PC-9 (cell line): ENCODE measurements at regions of chr7 and their contacts with region 1.

Region 1: DNA sequence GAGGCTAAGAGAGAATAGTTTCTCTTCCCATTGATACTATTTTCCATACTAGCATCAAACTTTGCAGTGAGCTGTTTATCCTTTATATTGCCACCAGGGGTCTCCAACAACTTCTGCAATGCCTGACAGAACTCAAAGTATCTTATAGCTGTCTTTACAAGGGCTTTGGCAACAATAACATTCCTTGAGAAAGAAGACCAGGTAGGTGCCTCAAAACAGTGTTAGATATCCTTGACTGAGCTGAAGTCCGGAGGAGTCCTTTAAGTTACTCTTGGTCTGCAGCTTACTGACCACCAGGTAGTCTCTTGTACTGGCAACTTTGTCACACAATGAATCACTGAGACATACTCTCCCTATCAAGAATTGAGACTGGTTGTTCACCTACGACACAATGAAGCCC is 30.0 kb upstream of the TES start:
- DNase-seq: peak; percentile 25 to 49
- H3K4me3 ChIP-seq: no peak overlapping the region
- H3K27ac ChIP-seq: no peak overlapping the region
- H3K4me1 ChIP-seq: peaks cover 11% of the 10 kb centered on the region; the same call in 1 of the 2 replicates
- H3K27me3 ChIP-seq: no peaks in the 10 kb centered on the region
- CTCF ChIP-seq: peak; percentile 89

Region 2: GRCh38 chr7:116211006-116211912 is 31.0 kb after region 1 on chr7:
- CTCF ChIA-PET with region 1: no interaction called
- POLR2A ChIA-PET with region 1: interaction called, 13 read pairs
- intact Hi-C with region 1: loop called (anchors 1 kb)
- DNase-seq: peak; percentile 92 to 93
- H3K4me3 ChIP-seq: peak overlapping the region; percentile 87
- H3K27ac ChIP-seq: peak overlapping the region; percentile 99
- H3K4me1 ChIP-seq: peaks cover 46% of the 10 kb centered on the region
- H3K27me3 ChIP-seq: no peaks in the 10 kb centered on the region
- CTCF ChIP-seq: no peak

Region 3: GRCh38 chr7:116236020-116236630 is 55.8 kb after region 1 on chr7:
- CTCF ChIA-PET with region 1: interaction called, 14 read pairs
- POLR2A ChIA-PET with region 1: interaction called, 8 read pairs
- intact Hi-C with region 1: loop called (anchors 1 kb)
- DNase-seq: no peak
- H3K4me3 ChIP-seq: no peak overlapping the region
- H3K27ac ChIP-seq: 0 out of 2 replicates have a peak overlapping the region, but pooled peaks have one; percentile 23
- H3K4me1 ChIP-seq: peaks cover 24% of the 10 kb centered on the region
- H3K27me3 ChIP-seq: no peaks in the 10 kb centered on the region
- CTCF ChIP-seq: peak; percentile 76

Region 4: GRCh38 chr7:116298055-116298454 is 117.8 kb after region 1 on chr7:
- CTCF ChIA-PET with region 1: no interaction called
- POLR2A ChIA-PET with region 1: no interaction called
- intact Hi-C with region 1: no loop called
- DNase-seq: no peak
- H3K4me3 ChIP-seq: no peak overlapping the region
- H3K27ac ChIP-seq: no peak overlapping the region
- H3K4me1 ChIP-seq: no peaks in the 10 kb centered on the region
- H3K27me3 ChIP-seq: no peaks in the 10 kb centered on the region
- CTCF ChIP-seq: no peak

Region 5: DNA sequence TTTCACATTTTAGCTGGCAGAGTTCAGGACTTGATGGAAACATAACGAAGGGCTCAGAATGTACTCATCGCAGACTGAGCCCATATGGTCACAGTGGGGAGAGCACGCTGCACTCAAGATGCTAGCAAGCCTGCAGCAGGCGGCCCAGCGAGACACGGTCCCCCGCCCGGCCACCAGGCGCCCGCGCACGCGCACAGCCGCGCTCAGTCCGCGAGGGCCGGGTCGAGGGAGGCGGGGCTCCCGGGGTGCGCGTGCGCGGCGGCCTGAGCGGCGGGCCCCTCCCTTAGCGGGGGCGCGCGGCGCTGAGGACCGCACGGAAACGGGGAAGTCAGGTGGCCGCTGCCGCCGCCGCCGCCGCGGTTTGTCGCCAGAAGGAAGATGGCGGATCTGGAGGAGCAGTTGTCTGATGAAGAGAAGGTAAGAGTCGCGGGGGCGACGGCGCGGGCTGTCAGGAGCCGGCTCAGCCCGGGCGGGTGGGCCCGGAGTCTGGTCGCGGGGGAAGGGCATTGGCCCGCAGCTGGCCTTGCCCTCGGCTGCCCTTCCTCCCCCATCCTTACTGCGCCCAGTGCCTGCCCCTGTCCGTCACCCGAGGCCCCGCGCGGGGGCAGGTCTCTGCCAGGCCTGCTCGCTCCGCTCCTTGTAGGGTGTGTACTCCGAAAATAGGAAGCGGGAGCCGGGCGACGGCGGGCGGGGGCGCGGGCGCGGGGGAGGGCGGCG is 682.1 kb after region 1 on chr7 and contains the start of gene CAPZA2:
- CTCF ChIA-PET with region 1: no interaction called
- POLR2A ChIA-PET with region 1: no interaction called
- intact Hi-C with region 1: loop called (anchors 2 kb)
- DNase-seq: peak; percentile 74 to 97
- H3K4me3 ChIP-seq: peak within 1 kb of the TSS; percentile 99
- H3K27ac ChIP-seq: peak within 1 kb of the TSS; percentile 53
- H3K4me1 ChIP-seq: peaks cover 37% of the 10 kb centered on the region
- H3K27me3 ChIP-seq: no peaks in the 10 kb centered on the region
- CTCF ChIP-seq: no peak
- total RNA-seq, gene CAPZA2: 171 and 203 TPM in 2 replicates